Keratinocyte (primary cell): ENCODE measurements at regions of chr2 and their contacts with region 1.

Region 1: GRCh38 chr2:159615140-159615951 is 1.0 kb downstream of the BAZ2B start:
- DNase-seq: peak; percentile 48
- H3K4me3 ChIP-seq: peak overlapping the region; percentile 75 to 95 (median 91)
- H3K27ac ChIP-seq: peak overlapping the region; percentile 99
- H3K4me1 ChIP-seq: peaks cover 24% of the 10 kb centered on the region
- H3K27me3 ChIP-seq: no peaks in the 10 kb centered on the region
- CTCF ChIP-seq: no peak

Region 2: DNA sequence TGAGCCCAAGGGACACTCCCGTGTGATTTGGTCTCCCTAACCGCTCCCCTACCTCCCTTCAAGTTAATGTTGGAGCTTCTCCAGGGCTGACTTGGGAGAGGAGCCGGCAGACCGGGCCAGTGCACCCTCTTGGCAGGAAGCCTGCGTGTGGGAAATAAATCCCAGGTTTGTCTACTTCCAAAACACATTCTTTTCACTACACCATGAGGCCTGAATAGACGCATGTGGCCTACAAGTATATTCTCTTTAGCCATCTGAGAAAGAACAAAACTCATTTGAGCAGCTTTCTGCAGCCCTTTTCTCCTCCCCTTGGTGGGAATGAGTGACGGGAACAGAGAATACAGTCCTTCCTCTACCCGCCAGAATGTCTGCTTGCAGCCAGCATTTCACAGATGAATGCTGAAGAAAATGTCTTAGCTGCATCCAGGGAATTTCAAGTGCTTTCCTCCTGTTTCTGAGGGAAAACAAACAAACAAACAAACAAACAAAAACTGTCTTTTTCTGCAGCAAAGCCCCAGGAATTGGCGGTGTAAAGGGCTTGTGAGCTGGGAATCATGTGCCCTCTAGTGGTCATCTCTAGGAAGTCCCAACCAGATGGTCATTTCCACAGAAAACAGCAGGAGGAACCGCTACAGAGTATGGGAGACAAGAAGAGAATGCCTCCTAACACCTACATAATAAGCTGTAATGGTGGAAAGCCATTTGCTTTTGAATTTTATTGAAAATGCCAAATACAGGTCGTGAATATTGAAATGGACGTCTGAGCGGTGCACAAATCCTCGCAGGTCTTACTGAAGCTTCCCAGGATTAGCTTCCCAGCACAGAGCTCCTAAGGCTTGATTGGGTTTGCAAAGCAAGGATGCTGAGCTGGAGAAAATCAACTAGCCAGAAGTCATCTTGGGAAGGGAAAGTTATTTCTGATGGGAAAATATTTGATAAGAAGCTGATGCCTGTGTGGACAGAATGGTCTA is 861.4 kb before region 1 on chr2:
- dilution Hi-C with region 1: no loop called
- DNase-seq: peak; percentile 46
- H3K4me3 ChIP-seq: no peak overlapping the region
- H3K27ac ChIP-seq: no peak overlapping the region
- H3K4me1 ChIP-seq: peaks cover 11% of the 10 kb centered on the region
- H3K27me3 ChIP-seq: no peaks in the 10 kb centered on the region
- CTCF ChIP-seq: peak; percentile 74 to 89 (median 88)

Region 3: GRCh38 chr2:159462331-159462730 is 153.0 kb before region 1 on chr2:
- dilution Hi-C with region 1: no loop called
- DNase-seq: no peak
- H3K4me3 ChIP-seq: no peak overlapping the region
- H3K27ac ChIP-seq: no peak overlapping the region
- H3K4me1 ChIP-seq: no peaks in the 10 kb centered on the region
- H3K27me3 ChIP-seq: no peaks in the 10 kb centered on the region
- CTCF ChIP-seq: no peak

Region 4: DNA sequence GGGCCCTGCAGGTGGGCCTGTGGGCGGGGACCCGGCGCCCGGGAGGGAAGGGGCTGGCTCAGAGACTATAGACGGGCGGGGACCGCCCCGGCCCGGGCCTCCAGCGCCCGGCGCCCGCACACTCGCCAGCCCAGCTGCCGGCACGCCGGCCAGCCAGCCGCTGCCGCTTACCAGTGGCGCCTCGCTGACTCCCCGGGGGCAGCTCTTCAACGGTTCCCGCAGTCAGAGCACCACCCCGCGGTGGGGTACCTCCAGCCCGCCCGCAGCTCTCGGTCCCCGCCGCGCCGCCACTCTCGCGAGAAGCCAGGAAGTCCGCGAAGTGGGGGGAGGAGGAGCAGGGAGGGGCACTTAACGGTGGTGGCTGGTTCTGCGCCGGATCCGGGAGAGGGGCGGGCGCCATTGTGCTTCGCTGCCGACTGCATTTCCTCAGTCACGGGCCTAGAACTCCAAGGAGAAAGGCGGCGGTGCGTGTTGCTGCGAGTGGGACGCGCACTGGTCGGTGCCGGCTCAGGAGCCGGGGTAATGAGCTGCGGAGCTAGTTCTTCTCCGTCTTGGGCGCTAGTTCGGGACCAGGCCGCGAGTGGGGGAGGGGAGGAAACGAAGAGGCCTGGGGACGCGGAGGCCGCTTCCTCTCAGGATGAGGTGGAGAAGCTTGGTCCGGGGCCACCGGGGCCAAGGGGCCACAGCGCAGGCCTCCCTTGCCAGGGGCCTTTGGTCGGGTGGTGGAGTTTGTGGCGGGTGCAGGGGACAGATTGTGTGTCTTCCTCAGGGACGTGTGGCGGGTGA is 97.0 kb after region 1 on chr2 and contains the start of gene MARCHF7:
- dilution Hi-C with region 1: loop called (anchors 25 kb)
- DNase-seq: no peak
- H3K4me3 ChIP-seq: peak within 1 kb of the TSS; percentile 73 to 100 (median 95)
- H3K27ac ChIP-seq: peak within 1 kb of the TSS; percentile 97
- H3K4me1 ChIP-seq: peaks cover 32% of the 10 kb centered on the region
- H3K27me3 ChIP-seq: no peaks in the 10 kb centered on the region
- CTCF ChIP-seq: peak; percentile 57 to 85 (median 77)
- polyA plus RNA-seq, gene MARCHF7: 52.0 to 89.4 TPM (median 52.9 TPM) in 3 replicates